Right ventricle myocardium inferior (tissue), 1 donor: ENCODE measurements at regions of chr1 and their contacts with region 1.

Region 1: GRCh38 chr1:160085686-160086455 is 4.5 kb downstream of the KCNJ9 start:
- DNase-seq: peak; percentile 91
- ATAC-seq: peak; percentile 74

Region 2: DNA sequence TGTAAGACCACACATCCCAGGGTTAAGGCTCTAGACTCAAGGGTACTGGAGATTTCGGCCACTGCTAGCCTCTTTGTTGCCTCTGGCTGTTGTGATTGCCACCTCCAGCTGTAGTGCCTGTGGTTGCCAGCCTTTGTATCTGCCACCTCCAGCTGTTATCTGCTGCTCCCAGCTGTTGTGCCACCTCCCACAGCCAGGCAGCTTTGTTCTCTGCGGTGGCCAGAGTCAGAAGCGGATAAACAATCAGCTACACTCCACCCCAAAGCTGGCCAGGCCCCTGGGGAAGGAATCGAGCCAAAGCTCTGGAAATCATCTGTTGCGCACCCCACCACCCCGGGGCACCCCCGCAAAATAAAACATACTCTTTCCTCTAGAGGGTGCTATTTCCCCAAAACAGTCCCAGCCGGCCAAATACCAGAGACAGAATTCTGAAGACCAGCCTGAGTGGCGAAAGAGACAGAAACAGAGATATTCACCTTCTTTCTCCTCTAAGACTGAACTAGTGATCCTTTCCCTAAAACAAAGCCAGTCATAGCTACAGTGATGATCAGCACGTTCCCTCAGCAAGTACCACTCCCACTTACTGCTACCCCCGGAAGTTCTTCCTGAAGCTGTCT is 39.3 kb before region 1 on chr1:
- intact Hi-C with region 1: loop called (anchors 1 kb)
- DNase-seq: no peak
- ATAC-seq: peak; percentile 90

Region 3: DNA sequence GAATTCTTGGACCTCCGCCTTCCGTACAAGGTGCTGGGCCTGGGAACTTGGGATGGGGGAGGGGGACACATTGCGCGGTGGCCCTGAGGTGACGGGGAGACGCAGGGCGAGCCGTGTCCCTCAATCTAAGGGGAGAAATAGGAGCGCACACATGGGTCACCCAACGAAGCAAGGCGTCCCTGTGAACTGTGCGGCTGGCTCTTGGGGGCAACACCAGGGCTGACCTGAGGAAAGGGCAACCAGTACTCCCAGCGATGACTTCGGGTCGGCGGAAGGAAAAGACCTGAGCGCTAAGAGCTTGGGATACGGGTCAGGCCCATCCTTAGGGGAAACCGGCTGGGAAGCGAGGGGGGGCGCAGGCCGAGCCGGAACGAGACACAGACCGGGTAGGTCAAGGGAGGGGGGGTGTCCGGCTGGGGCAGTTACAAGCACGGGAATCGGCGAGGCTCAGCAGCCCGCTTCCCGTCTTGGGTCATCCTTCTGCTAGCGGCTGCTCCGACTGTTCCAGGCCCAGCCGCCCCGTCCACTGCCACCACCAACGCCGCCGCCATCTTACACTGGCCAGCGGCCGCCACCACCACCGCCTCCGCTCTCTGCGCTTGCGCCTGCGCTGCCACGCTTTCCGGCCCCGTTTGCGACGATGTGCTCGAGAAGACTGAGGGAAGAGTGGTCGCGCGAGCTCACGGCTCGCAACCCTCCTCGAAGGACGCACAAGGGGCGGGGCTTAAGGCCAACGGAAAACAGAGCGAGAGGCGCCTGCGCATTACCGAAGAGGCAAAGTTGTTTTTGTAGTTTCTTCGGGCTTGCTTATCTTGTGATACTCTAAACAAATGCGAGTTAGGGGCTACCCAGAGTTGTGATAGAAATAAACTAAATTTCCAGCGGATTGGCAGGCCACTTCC is 176.3 kb after region 1 on chr1 and contains the start of gene DCAF8:
- intact Hi-C with region 1: no loop called
- DNase-seq: peak; percentile 99
- ATAC-seq: peak; percentile 99
- total RNA-seq, gene DCAF8: 142 TPM